Lower lobe of right lung (tissue), 2 donors: ENCODE measurements at regions of chr3 and their contacts with region 1.

Region 1: GRCh38 chr3:163632722-163633121 is 1445.6 kb downstream of the SI start:
- DNase-seq: no peak
- ATAC-seq: no peak
- H3K4me3 ChIP-seq: no peak overlapping the region
- H3K27ac ChIP-seq: no peak overlapping the region
- H3K4me1 ChIP-seq: no peaks in the 10 kb centered on the region
- H3K27me3 ChIP-seq: no peaks in the 10 kb centered on the region
- CTCF ChIP-seq: no peak

Region 2: GRCh38 chr3:163513258-163513657 is 119.5 kb before region 1 on chr3:
- intact Hi-C with region 1: loop called (anchors 5 kb)
- DNase-seq: no peak
- ATAC-seq: no peak
- H3K4me3 ChIP-seq: no peak overlapping the region
- H3K27ac ChIP-seq: no peak overlapping the region
- H3K4me1 ChIP-seq: no peaks in the 10 kb centered on the region
- H3K27me3 ChIP-seq: no peaks in the 10 kb centered on the region
- CTCF ChIP-seq: no peak

Region 3: GRCh38 chr3:163863146-163863545 is 230.4 kb after region 1 on chr3:
- intact Hi-C with region 1: no loop called
- DNase-seq: no peak
- ATAC-seq: no peak
- H3K4me3 ChIP-seq: no peak overlapping the region
- H3K27ac ChIP-seq: no peak overlapping the region
- H3K4me1 ChIP-seq: no peaks in the 10 kb centered on the region
- H3K27me3 ChIP-seq: no peaks in the 10 kb centered on the region
- CTCF ChIP-seq: no peak